ENCODE measurements at regions of chr6 and their contacts with region 1.

Region 1: GRCh38 chr6:34362909-34363680 is 29.4 kb downstream of the NUDT3 start:
- DNase-seq: peak; percentile 4
- H3K4me3 Mint-ChIP-seq: no peak overlapping the region
- H3K27ac Mint-ChIP-seq: no peak overlapping the region
- H3K4me1 Mint-ChIP-seq: peaks cover 41% of the 10 kb centered on the region
- H3K27me3 Mint-ChIP-seq: no peaks in the 10 kb centered on the region

Region 2: DNA sequence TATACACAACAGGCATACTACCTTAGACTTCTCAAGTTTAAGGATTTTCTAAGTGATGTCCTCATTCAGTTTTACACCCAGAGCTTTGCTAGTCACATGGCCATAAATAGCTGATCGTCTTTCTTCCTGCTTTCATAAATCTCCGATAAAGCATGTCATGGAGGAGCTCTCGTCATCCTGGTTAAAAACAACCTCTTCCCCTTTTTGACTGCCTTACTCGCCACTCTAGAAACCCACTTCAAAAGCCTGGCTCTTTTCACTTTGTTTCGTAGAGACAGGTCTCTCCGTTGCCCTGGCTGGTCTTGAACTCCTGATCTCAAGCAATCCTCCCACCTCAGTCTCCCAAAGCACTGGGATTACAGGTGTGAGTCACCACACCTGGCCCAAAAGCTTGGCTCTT is 47.3 kb before region 1 on chr6:
- intact Hi-C with region 1: loop called (anchors 10 kb)
- DNase-seq: no peak
- H3K4me3 Mint-ChIP-seq: peak overlapping the region; percentile 34
- H3K27ac Mint-ChIP-seq: no peak overlapping the region
- H3K4me1 Mint-ChIP-seq: peaks cover 50% of the 10 kb centered on the region
- H3K27me3 Mint-ChIP-seq: no peaks in the 10 kb centered on the region